ENCODE measurements at regions of chr13 and their contacts with region 1.

Region 1: GRCh38 chr13:97432917-97433726 is 847 bp upstream of the RAP2A start:
- DNase-seq: peak; percentile 100
- H3K4me3 ChIP-seq: peak overlapping the region; percentile 70 to 87 (median 76)
- H3K27ac ChIP-seq: peak overlapping the region; percentile 95
- H3K4me1 ChIP-seq: peaks cover 17% of the 10 kb centered on the region
- H3K27me3 ChIP-seq: no peaks in the 10 kb centered on the region
- CTCF ChIP-seq: no peak
- POLR2A ChIP-seq: peak; percentile 90

Region 2: DNA sequence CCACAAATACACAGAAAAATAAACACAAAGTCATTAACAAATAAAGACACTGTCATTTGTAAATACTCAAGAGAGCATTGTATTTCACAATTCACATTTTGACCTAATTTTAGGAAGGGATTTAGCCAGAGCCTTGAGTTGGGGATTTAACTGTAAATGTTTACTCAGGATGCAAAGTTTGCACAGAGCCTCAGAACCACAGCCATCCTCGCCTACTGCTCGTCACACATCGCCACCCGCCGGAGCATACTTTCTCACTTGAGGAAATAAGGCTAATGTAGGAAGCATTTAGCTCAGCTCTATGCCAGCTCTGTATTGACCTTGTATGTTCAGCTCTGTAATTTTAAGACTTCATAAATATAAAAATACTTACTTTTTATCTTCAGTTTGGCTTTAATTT is 881.6 kb before region 1 on chr13:
- CTCF ChIA-PET with region 1: no interaction called
- POLR2A ChIA-PET with region 1: no interaction called
- dilution Hi-C with region 1: no loop called
- intact Hi-C with region 1: no loop called
- DNase-seq: no peak
- H3K4me3 ChIP-seq: no peak overlapping the region
- H3K27ac ChIP-seq: no peak overlapping the region
- H3K4me1 ChIP-seq: no peaks in the 10 kb centered on the region
- H3K27me3 ChIP-seq: no peaks in the 10 kb centered on the region
- CTCF ChIP-seq: no peak
- POLR2A ChIP-seq: no peak

Region 3: DNA sequence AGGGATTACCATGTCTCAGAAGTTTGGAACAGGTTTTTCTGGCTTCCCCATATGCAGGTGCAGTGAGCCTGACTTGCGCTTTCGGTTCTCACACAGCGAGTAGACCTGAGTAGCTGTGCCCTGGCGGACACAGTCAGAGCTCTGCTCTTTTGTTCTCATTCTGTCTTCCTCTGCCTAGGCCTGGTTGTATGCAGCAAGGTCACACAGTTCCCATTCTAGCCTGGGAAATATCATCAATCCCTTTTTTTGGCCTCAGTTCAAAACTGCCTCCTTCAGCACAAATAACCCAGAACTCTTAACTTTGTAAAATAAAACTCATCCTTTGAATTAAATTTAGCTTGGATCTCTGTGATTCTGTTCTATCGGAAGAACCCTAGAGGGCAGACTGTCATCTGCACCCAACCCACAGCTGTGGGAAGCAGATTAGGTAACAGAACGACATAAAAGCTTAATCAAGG is 449.0 kb before region 1 on chr13:
- CTCF ChIA-PET with region 1: no interaction called
- POLR2A ChIA-PET with region 1: no interaction called
- dilution Hi-C with region 1: no loop called
- intact Hi-C with region 1: loop called (anchors 2 kb)
- DNase-seq: peak; percentile 75
- H3K4me3 ChIP-seq: peak overlapping the region in 1 of 3 experiments; percentile 29
- H3K27ac ChIP-seq: no peak overlapping the region
- H3K4me1 ChIP-seq: peaks cover 21% of the 10 kb centered on the region
- H3K27me3 ChIP-seq: peaks cover 17 to 18% of the 10 kb centered on the region in 2 experiments
- CTCF ChIP-seq: peak in 1 of 2 donors; percentile 12
- POLR2A ChIP-seq: no peak

Region 4: GRCh38 chr13:97445522-97446187 is 12.5 kb after region 1 on chr13:
- CTCF ChIA-PET with region 1: interaction called, 3 read pairs
- POLR2A ChIA-PET with region 1: no interaction called
- dilution Hi-C with region 1: no loop called
- intact Hi-C with region 1: loop called (anchors 1 kb)
- DNase-seq: no peak
- H3K4me3 ChIP-seq: no peak overlapping the region
- H3K27ac ChIP-seq: no peak overlapping the region
- H3K4me1 ChIP-seq: no peaks in the 10 kb centered on the region
- H3K27me3 ChIP-seq: no peaks in the 10 kb centered on the region
- CTCF ChIP-seq: no peak
- POLR2A ChIP-seq: no peak

Region 5: DNA sequence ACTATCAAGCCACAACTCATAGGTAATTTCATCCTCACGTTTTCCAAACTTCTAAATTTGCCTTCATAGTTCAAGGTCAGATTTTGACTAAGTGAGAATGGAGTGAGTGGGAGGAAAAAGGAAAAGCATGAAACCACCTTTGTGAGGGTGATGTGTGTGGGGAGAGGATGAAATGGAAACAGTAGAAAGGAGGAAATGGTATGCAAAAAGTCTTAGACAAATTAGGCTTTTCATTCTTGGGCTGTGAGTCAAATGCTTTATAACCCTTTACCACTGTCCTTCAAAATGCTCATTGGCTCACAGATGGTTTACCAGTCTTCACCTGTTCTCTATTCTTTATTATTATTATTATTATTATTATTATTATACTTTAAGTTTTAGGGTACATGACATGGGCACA is 128.1 kb after region 1 on chr13:
- CTCF ChIA-PET with region 1: no interaction called
- POLR2A ChIA-PET with region 1: no interaction called
- dilution Hi-C with region 1: no loop called
- intact Hi-C with region 1: no loop called
- DNase-seq: no peak
- H3K4me3 ChIP-seq: no peak overlapping the region
- H3K27ac ChIP-seq: no peak overlapping the region
- H3K4me1 ChIP-seq: no peaks in the 10 kb centered on the region
- H3K27me3 ChIP-seq: peaks cover 0 to 8% of the 10 kb centered on the region in 2 experiments
- CTCF ChIP-seq: no peak
- POLR2A ChIP-seq: no peak

Region 6: GRCh38 chr13:97648171-97648880 is 215.2 kb after region 1 on chr13:
- CTCF ChIA-PET with region 1: no interaction called
- POLR2A ChIA-PET with region 1: no interaction called
- dilution Hi-C with region 1: no loop called
- intact Hi-C with region 1: loop called (anchors 1 kb)
- DNase-seq: peak; percentile 88
- H3K4me3 ChIP-seq: peak overlapping the region in 1 of 3 experiments; percentile 45
- H3K27ac ChIP-seq: peak overlapping the region; percentile 85
- H3K4me1 ChIP-seq: peaks cover 14% of the 10 kb centered on the region
- H3K27me3 ChIP-seq: no peaks in the 10 kb centered on the region
- CTCF ChIP-seq: no peak
- POLR2A ChIP-seq: no peak

Region 7: GRCh38 chr13:97798836-97799235 is 365.7 kb after region 1 on chr13:
- CTCF ChIA-PET with region 1: interaction called, 3 read pairs
- POLR2A ChIA-PET with region 1: no interaction called
- dilution Hi-C with region 1: no loop called
- intact Hi-C with region 1: loop called (anchors 1 kb)
- DNase-seq: no peak
- H3K4me3 ChIP-seq: no peak overlapping the region
- H3K27ac ChIP-seq: no peak overlapping the region
- H3K4me1 ChIP-seq: no peaks in the 10 kb centered on the region
- H3K27me3 ChIP-seq: peaks cover 0 to 3% of the 10 kb centered on the region in 2 experiments
- CTCF ChIP-seq: no peak
- POLR2A ChIP-seq: no peak

Measured in endothelial cell of umbilical vein (primary cell).